MCF 10A (cell line): ENCODE measurements at regions of chr9 and their contacts with region 1.

Region 1: DNA sequence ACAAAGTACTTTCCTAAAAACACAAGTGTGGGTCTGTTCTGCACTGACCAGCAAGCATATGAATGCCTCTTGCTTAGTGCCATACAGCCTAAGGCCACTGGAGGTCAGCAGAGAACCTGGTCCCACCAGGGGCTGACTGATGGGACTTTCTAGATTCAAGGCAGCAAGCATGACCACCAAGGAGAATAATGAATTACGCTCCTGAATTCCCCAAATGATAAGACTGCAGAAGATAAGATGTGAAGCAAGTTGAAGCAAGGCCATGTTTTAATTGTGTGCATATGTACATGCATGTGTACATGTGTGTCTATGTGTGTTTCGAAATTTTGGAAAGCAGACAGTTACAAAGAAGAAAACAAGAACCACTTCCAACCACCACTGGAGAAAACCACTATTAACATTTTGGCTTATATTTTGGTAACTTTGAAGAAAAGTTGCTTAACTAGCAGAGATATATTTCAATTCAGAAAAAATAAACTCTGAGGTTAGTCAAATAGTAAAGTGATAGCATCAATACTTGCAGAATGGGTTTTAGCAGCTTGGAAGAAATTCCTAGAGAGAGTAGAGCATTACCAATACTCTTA is 70.5 kb downstream of the ERP44 start:
- DNase-seq: peak; percentile 77
- H3K4me3 Mint-ChIP-seq: no peak overlapping the region
- H3K27ac Mint-ChIP-seq: no peak overlapping the region
- H3K4me1 Mint-ChIP-seq: no peaks in the 10 kb centered on the region
- H3K27me3 Mint-ChIP-seq: no peaks in the 10 kb centered on the region
- CTCF ChIP-seq: peak; percentile 85

Region 2: DNA sequence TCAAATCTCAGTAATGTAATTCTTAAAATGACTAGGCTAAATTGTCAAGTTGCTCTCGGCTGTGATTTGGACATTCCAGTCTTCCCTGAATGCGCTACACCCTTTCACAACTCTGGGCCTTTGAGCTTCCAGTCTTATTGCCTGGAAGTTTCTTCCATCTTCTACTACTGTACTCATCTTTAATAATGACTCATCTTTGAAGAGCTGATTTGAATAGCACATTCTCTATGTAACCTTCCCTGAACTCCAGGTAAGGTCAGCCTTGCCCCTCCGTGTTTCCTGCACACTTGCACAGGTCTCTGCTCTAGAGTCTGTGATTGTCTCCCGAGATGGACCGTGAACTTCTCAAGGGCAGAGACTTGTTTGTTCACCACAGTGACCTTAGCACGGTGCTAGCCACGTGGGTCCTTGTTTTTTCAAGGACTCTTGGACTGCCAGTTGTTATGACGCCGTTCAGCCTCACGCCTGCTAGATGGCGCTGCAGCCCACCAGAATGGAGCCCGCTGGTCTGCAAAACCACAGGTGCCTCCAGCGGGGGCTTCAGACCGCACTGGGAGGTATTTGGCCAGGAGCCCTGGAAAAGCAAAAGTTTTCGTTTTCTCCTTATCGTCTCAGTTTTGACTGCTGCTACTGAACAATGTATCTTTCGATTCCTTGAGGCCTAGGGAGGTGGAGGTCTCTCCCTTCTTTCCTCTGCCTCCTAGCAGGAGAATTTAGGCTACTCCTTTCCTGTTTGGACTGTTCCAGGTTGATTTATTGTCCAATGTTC is 761.9 kb before region 1 on chr9:
- CTCF ChIA-PET with region 1: no interaction called
- POLR2A ChIA-PET with region 1: no interaction called
- intact Hi-C with region 1: loop called (anchors 1 kb)
- DNase-seq: peak; percentile 72
- H3K4me3 Mint-ChIP-seq: peak overlapping the region; percentile 37
- H3K27ac Mint-ChIP-seq: no peak overlapping the region
- H3K4me1 Mint-ChIP-seq: peaks cover 19% of the 10 kb centered on the region
- H3K27me3 Mint-ChIP-seq: peaks cover 16% of the 10 kb centered on the region
- CTCF ChIP-seq: peak; percentile 83

Region 3: GRCh38 chr9:100098887-100099721 is 70.8 kb after region 1 on chr9 and contains the starts of genes ERP44 and INVS:
- CTCF ChIA-PET with region 1: interaction called, 3 read pairs
- POLR2A ChIA-PET with region 1: interaction called, 3 read pairs
- intact Hi-C with region 1: loop called (anchors 1 kb)
- DNase-seq: peak; percentile 99
- H3K4me3 Mint-ChIP-seq: peak within 1 kb of the TSS; percentile 97
- H3K27ac Mint-ChIP-seq: peak within 1 kb of the TSS; percentile 96
- H3K4me1 Mint-ChIP-seq: peaks cover 23% of the 10 kb centered on the region
- H3K27me3 Mint-ChIP-seq: no peaks in the 10 kb centered on the region
- CTCF ChIP-seq: no peak
- total RNA-seq, gene ERP44: 26.3 and 31.8 TPM in 2 replicates
- total RNA-seq, gene INVS: 21.9 and 24.9 TPM in 2 replicates

Region 4: DNA sequence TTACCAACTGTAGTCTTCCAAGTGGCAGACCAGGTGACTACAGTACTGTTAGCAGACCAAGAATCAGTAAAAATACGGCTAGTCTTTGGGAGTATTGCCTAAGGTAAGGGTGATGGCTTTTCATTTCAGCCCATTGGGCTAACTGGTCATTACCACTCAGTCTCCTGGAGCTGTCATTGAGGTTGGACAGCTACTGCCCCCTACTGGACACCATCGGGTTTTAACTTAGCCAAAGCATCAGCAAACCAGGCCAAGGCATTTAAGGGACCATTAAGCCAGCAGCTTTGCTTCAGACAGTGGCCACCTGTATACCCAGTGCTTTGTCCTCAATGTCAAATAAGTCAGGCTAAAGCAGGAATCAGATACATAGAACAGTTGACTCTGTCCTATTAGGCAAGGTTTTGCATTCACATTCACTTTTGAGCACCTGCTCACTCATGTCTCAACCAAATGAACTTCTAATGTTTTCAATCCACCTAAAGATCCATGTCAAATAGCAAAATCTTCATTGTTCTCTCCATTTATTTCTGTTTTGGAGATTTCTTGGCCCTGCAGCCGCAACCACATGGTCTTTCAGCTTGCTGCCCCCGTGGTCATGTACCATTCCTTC is 188.0 kb after region 1 on chr9:
- CTCF ChIA-PET with region 1: interaction called, 6 read pairs
- POLR2A ChIA-PET with region 1: no interaction called
- intact Hi-C with region 1: loop called (anchors 1 kb)
- DNase-seq: peak; percentile 74
- H3K4me3 Mint-ChIP-seq: no peak overlapping the region
- H3K27ac Mint-ChIP-seq: no peak overlapping the region
- H3K4me1 Mint-ChIP-seq: no peaks in the 10 kb centered on the region
- H3K27me3 Mint-ChIP-seq: no peaks in the 10 kb centered on the region
- CTCF ChIP-seq: peak; percentile 60

Region 5: DNA sequence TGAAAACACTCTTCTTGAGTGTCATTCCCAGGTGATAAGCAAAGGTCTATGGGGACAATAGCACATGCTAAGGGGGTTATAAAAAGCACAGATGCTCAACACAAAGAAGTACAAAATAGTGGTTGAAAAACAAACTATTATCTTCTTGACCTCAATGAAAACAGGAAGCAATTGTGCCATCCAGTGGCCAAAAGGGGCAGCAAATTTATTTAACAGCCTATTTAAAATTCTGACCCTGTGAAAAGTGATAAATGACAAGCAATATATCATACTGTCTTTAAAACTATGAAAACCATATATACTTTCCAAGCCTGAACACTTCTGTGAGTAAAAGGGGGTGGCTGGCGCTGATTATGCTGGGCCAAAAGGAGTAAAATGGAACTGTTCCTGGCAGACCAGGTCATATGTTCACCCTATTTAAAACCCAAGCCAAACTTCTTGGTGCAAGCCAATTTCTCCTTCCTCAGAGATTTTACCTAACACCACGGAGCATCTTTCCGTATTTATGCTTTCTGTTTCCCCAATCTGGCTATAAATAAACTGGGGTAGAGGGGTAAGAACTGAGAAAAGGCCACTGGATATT is 294.8 kb after region 1 on chr9:
- CTCF ChIA-PET with region 1: interaction called, 6 read pairs
- POLR2A ChIA-PET with region 1: no interaction called
- intact Hi-C with region 1: loop called (anchors 5 kb)
- DNase-seq: peak; percentile 46
- H3K4me3 Mint-ChIP-seq: no peak overlapping the region
- H3K27ac Mint-ChIP-seq: no peak overlapping the region
- H3K4me1 Mint-ChIP-seq: peaks cover 3% of the 10 kb centered on the region
- H3K27me3 Mint-ChIP-seq: no peaks in the 10 kb centered on the region
- CTCF ChIP-seq: peak; percentile 27